Activated B cell treated with CpG ODN at 0.5 μM for 24 hours (primary cell): ENCODE measurements at regions of chr5 and their contacts with region 1.

Region 1: DNA sequence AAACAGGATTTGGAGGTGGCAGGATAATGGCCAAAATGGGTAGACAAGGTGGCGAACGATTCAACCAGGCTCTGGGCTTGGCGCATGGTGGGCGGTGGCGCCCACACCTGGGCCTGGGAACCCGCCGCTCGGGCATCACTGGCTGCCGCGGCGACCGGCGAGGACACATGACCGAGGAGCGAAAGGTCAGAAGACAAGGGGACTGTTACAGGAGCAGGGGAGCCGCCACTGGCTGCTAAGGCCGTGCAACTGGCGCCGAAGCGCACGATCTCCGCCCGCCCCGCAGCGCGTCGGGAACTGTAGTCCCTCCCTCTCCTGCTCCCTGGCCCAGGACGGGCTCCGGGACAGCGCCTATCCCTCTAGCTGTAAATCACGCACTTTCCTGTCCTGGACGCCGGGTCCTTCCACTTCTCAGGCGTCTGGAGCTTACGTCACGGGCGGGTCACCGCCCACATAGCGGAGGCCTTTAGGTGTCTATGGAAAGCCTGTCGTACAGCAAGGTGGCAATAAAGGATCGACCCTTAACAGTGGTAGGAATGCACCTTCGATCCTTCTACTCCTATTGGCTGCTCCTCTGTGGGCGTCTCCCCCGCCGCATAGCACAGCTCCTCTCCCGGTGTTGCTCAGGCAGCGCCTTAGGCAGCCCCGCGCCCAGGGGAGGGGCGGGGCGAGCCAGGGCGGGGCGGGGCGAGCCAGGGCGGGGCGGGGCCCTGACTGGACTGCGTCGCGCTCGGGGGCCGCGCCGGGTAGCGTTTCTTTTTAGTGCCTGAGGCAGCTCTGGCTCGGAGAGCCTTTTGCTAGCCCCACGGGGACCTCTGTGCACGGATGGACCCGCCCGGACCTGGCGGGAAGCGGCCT is at the start of gene ICE1:
- DNase-seq: peak; percentile 92
- ATAC-seq: peak; percentile 87
- H3K4me3 Mint-ChIP-seq: peak within 1 kb of the TSS; percentile 96
- H3K27ac Mint-ChIP-seq: peak within 1 kb of the TSS; percentile 95
- H3K4me1 Mint-ChIP-seq: peaks cover 15% of the 10 kb centered on the region
- H3K27me3 Mint-ChIP-seq: no peaks in the 10 kb centered on the region
- CTCF ChIP-seq: no peak
- total RNA-seq, gene ICE1: 32.7 and 36.8 TPM in 2 replicates

Region 2: GRCh38 chr5:5141625-5142532 is 280.3 kb before region 1 on chr5:
- CTCF ChIA-PET with region 1: interaction called, 12 read pairs
- POLR2A ChIA-PET with region 1: no interaction called
- intact Hi-C with region 1: no loop called
- DNase-seq: no peak
- ATAC-seq: no peak
- H3K4me3 Mint-ChIP-seq: no peak overlapping the region
- H3K27ac Mint-ChIP-seq: no peak overlapping the region
- H3K4me1 Mint-ChIP-seq: no peaks in the 10 kb centered on the region
- H3K27me3 Mint-ChIP-seq: peaks cover 18% of the 10 kb centered on the region
- CTCF ChIP-seq: peak; percentile 82

Region 3: DNA sequence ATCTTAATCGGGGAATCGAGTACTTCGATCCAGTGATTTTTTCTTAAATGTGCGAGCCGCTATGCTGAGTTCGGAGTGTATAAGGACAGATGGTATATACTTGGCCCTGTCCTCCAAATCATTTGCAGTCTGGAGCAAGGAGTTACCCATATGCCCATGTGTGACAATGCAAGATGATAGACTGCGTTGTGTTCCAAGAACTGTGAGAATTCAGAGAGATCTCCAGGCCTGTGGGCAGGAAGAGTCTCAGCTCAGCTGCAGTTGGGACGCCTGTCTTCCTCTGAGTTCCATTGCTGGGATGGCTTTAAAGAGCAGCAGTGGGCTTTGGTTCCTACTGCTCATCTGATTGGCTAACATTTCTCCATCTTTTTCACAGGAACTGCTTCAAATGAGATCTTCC is 175.5 kb before region 1 on chr5:
- CTCF ChIA-PET with region 1: no interaction called
- POLR2A ChIA-PET with region 1: no interaction called
- intact Hi-C with region 1: no loop called
- DNase-seq: no peak
- ATAC-seq: no peak
- H3K4me3 Mint-ChIP-seq: no peak overlapping the region
- H3K27ac Mint-ChIP-seq: no peak overlapping the region
- H3K4me1 Mint-ChIP-seq: no peaks in the 10 kb centered on the region
- H3K27me3 Mint-ChIP-seq: no peaks in the 10 kb centered on the region
- CTCF ChIP-seq: no peak

Region 4: DNA sequence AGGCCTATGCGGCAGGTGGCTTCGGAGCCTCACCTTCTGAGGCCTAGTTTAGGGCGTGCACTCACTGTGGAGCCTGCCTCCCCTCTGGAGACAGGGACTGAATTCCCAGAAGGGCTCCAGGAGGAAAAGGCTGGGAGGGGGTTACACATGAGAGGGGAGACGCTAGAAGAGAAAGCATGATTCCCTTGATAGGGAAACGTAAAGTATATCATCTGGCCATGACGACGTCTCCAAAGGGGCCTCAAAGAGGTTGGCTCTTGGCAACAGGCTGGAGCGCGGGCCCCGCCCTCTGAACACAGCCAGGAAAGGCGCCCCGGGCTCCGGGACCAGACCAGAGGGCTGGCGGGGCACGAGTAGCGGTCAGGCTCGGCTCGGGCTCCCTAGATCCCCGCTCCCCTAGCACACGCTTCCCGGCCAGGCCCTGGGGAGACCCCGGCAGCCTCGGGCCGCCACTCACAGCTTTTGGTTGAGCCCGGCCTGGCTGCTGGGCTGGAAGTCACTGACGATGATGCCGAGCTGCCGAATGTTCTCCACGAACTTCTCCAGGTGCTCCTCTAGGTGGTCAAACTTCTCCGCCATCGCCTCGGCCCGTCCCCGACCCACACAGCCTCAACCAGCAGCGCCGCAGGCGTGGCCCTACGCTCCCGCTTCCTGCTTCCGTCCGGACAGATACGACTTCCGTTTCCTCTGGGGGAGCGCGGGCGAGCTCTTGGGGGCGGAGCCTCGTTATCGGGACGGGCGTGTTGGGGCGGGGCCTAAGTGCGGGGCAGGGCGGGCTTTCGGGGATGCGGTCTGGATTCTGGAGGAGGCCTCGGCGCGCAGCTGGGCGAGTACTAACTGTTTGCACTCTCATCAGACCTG is 955.9 kb after region 1 on chr5 and contains the start of gene MED10:
- CTCF ChIA-PET with region 1: no interaction called
- POLR2A ChIA-PET with region 1: interaction called, 8 read pairs
- intact Hi-C with region 1: loop called (anchors 1 kb)
- DNase-seq: peak; percentile 91
- ATAC-seq: peak; percentile 98
- H3K4me3 Mint-ChIP-seq: peak within 1 kb of the TSS; percentile 95
- H3K27ac Mint-ChIP-seq: peak within 1 kb of the TSS; percentile 89
- H3K4me1 Mint-ChIP-seq: peaks cover 38% of the 10 kb centered on the region
- H3K27me3 Mint-ChIP-seq: peaks cover 2% of the 10 kb centered on the region
- CTCF ChIP-seq: no peak
- total RNA-seq, gene MED10: 45.0 and 47.7 TPM in 2 replicates

Region 5: GRCh38 chr5:6652025-6652424 is 1229.8 kb after region 1 on chr5:
- CTCF ChIA-PET with region 1: no interaction called
- POLR2A ChIA-PET with region 1: interaction called, 16 read pairs
- intact Hi-C with region 1: no loop called
- DNase-seq: no peak
- ATAC-seq: peak; percentile 91
- H3K4me3 Mint-ChIP-seq: peak overlapping the region; percentile 32
- H3K27ac Mint-ChIP-seq: peak overlapping the region; percentile 59
- H3K4me1 Mint-ChIP-seq: peaks cover 16% of the 10 kb centered on the region
- H3K27me3 Mint-ChIP-seq: no peaks in the 10 kb centered on the region
- CTCF ChIP-seq: no peak

Region 6: GRCh38 chr5:6737023-6737941 is 1315.1 kb after region 1 on chr5:
- CTCF ChIA-PET with region 1: no interaction called
- POLR2A ChIA-PET with region 1: interaction called, 3 read pairs
- intact Hi-C with region 1: loop called (anchors 1 kb)
- DNase-seq: no peak
- ATAC-seq: peak; percentile 66
- H3K4me3 Mint-ChIP-seq: peak overlapping the region; percentile 60
- H3K27ac Mint-ChIP-seq: peak overlapping the region; percentile 88
- H3K4me1 Mint-ChIP-seq: peaks cover 60% of the 10 kb centered on the region
- H3K27me3 Mint-ChIP-seq: no peaks in the 10 kb centered on the region
- CTCF ChIP-seq: no peak